Mammary epithelial cell (primary cell): ENCODE measurements at regions of chr12 and their contacts with region 1.

Region 1: DNA sequence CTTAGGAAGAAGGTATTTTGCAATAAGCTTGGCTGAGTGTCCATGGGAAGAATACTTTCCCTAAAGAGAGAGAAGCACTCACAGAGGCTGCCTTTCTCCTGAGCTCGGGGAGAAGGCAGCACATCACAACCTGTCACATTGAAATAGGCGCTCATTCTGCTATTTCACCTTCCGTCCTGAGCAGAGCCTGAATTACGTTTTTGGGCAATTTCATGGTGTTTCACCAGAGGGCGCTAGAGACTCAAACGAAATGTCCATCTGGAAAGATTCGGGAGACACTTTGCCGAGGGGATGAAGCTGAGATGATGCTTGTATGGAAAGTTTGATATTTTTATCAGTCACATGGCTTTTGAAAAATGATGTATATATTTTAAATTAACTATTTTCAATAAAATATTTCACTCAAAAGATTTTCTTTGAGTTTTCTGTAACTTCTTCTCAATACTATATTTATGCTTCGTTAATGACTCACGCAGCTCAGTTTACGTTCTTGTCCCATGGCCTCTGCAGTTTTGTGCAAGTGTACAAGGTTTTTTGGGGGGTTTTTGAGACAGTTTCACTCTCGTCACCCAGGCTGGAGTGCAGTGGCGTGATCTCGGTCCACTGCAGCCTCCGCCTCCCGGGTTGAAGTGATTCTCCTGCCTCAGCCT is 17.4 kb upstream of the B4GALNT3 start:
- DNase-seq: peak; percentile 32
- H3K4me3 ChIP-seq: no peak overlapping the region
- H3K27ac ChIP-seq: no peak overlapping the region
- H3K4me1 ChIP-seq: no peaks in the 10 kb centered on the region
- H3K27me3 ChIP-seq: no peaks in the 10 kb centered on the region
- CTCF ChIP-seq: peak; percentile 69 to 87

Region 2: DNA sequence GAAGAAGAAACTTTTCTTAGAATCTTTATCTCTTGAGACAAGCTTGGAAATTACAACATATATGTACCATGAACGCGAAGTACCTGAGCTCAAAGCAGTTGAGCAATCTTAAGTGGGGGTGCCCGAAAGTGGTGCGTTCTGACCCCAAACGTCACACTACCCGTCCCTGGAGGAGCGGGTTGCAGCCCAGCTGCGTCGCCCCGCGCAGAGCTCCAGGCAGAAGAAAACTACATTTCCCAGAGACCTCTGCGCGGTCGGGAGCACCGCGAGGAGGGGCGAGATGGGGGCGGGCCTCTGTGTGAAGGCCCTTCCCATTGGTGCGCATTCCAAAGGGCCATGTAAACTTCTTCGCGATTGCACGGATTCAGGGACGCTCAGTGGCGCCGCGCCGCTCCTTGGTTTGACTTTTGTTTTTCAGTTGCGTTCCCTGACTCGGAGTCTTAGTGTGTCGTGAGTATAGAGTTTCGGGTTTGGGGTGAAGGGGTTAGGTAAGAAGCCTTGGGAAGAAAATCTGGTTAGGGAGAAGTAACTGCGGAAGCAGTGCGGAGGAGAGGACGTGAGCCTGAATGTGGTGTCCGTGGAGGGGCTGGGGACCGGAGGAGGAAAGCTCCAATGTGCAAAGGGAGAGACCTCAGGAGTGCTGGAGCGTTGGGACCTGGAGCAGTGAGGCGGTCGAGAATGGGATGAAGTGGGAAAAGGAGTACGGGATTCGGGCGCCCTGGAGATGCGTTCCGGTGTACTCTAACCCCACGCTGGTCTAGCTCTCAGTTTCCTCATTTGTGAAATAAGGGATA is 40.9 kb before region 1 on chr12 and contains the start of gene CCDC77:
- CTCF ChIA-PET with region 1: interaction called, 9 read pairs
- dilution Hi-C with region 1: loop called (anchors 5 kb)
- in situ Hi-C with region 1: no loop called
- intact Hi-C with region 1: no loop called
- DNase-seq: peak; percentile 90
- H3K4me3 ChIP-seq: peak within 1 kb of the TSS; percentile 72 to 79 (median 76)
- H3K27ac ChIP-seq: peak within 1 kb of the TSS; percentile 67
- H3K4me1 ChIP-seq: peaks cover 4% of the 10 kb centered on the region
- H3K27me3 ChIP-seq: no peaks in the 10 kb centered on the region
- CTCF ChIP-seq: peak in 1 of 2 donors; percentile 46
- total RNA-seq, gene CCDC77: 5.3 to 8.8 TPM

Region 3: GRCh38 chr12:546921-547845 is 104.8 kb after region 1 on chr12:
- CTCF ChIA-PET with region 1: no interaction called
- dilution Hi-C with region 1: no loop called
- in situ Hi-C with region 1: loop called in 1 of 2 experiments (anchors 5 kb)
- intact Hi-C with region 1: loop called (anchors 1 kb)
- DNase-seq: peak; percentile 27
- H3K4me3 ChIP-seq: no peak overlapping the region
- H3K27ac ChIP-seq: no peak overlapping the region
- H3K4me1 ChIP-seq: no peaks in the 10 kb centered on the region
- H3K27me3 ChIP-seq: no peaks in the 10 kb centered on the region
- CTCF ChIP-seq: peak; percentile 77 to 99

Region 4: GRCh38 chr12:553205-554000 is 111.0 kb after region 1 on chr12:
- CTCF ChIA-PET with region 1: no interaction called
- dilution Hi-C with region 1: no loop called
- in situ Hi-C with region 1: loop called in 1 of 2 experiments (anchors 5 kb)
- intact Hi-C with region 1: no loop called
- DNase-seq: no peak
- H3K4me3 ChIP-seq: no peak overlapping the region
- H3K27ac ChIP-seq: no peak overlapping the region
- H3K4me1 ChIP-seq: no peaks in the 10 kb centered on the region
- H3K27me3 ChIP-seq: no peaks in the 10 kb centered on the region
- CTCF ChIP-seq: no peak